ENCODE measurements at regions of chr10 and their contacts with region 1.

Region 1: GRCh38 chr10:94735197-94735596 is 27.3 kb upstream of the CYP2C19 start:
- DNase-seq: no peak
- ATAC-seq: no peak

Region 2: DNA sequence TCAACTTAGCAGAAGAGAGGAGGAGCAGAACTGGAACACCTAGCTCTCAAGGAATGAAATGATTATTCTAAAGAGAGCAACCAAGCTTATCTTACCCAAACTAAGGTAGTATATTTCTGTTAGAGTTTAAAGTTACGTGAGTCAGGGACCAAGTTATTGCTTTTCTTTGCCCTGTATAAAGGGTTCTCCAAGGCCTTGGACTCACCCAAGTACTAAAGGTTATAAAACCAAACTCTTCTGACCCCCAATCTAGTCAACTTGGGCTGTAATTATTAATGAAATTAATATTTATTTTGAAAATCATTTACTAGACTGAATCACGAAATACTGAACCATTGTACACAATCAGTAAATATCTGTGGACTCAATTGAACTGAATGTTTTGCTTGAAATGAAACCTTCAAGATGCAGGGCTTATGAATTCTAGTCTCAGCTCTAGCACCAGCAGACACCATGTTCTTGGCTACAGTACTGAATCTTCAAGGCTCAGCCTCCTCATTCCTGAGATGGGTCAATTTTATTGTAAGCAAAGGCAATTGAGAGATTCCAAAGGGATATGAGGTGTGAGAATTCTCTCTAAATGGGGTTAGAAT is 25.5 kb after region 1 on chr10:
- intact Hi-C with region 1: loop called (anchors 1 kb)
- DNase-seq: no peak
- ATAC-seq: no peak

Region 3: DNA sequence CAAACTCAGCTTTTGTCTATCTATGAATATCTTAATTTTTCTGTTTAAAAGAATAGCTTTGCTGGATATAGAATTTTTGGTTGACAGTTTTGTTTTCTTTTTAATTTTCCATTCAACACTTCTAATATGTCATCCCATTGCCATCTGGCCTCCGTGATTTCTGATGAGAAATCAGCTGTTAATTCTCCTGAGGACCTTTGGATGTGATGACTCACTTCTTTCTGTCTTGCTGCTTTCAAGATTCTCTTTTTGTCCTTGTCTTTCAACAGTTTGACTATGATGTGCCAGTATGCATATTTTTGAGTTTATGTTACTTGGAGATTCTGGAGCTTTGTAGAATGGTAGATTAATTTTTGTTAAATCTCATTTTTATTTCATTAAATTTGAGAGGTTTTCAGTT is 1433.3 kb after region 1 on chr10:
- intact Hi-C with region 1: no loop called
- DNase-seq: no peak
- ATAC-seq: no peak